Endothelial cell of umbilical vein (primary cell): ENCODE measurements at regions of chr15 and their contacts with region 1.

Region 1: DNA sequence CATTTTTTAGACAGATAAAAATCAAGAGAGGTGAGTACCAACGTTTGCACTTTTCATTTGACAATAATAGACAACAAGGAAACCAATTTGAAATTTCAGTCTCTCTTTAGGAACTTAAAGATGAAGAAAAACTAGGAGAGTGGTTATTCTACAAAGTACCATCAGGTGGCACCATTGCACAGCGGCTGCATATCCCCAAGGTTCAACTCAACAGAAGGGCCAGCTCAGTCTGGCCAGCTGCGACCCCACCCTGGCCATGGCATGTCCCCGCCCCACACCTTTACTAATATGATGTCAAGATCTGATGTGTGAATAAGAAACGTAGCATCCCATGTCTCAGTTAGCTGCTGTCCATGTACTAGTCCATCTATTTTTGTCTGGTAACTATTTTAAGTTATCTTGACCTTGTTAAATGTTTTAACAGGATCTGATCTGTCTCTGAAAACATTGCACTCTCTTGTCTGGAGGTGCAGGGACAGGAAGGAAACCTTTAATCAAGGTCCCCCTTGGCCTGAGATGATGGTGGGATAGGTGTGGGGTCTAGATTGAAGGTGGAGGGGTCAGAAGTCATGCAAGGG is 35.5 kb upstream of the CGNL1 start:
- DNase-seq: peak; percentile 82
- H3K4me3 ChIP-seq: no peak overlapping the region
- H3K27ac ChIP-seq: no peak overlapping the region
- H3K4me1 ChIP-seq: peaks cover 38% of the 10 kb centered on the region
- H3K27me3 ChIP-seq: no peaks in the 10 kb centered on the region
- CTCF ChIP-seq: peak; percentile 59 to 72
- POLR2A ChIP-seq: no peak

Region 2: GRCh38 chr15:56821721-56822425 is 518.9 kb before region 1 on chr15:
- CTCF ChIA-PET with region 1: interaction called, 5 read pairs
- POLR2A ChIA-PET with region 1: no interaction called
- dilution Hi-C with region 1: no loop called
- intact Hi-C with region 1: loop called (anchors 10 kb)
- DNase-seq: peak; percentile 77
- H3K4me3 ChIP-seq: no peak overlapping the region
- H3K27ac ChIP-seq: no peak overlapping the region
- H3K4me1 ChIP-seq: peaks cover 18% of the 10 kb centered on the region
- H3K27me3 ChIP-seq: peaks cover 0 to 3% of the 10 kb centered on the region in 2 experiments
- CTCF ChIP-seq: peak; percentile 65 to 74
- POLR2A ChIP-seq: no peak

Region 3: GRCh38 chr15:56989411-56989924 is 351.3 kb before region 1 on chr15:
- CTCF ChIA-PET with region 1: no interaction called
- POLR2A ChIA-PET with region 1: no interaction called
- dilution Hi-C with region 1: no loop called
- intact Hi-C with region 1: no loop called
- DNase-seq: no peak
- H3K4me3 ChIP-seq: no peak overlapping the region
- H3K27ac ChIP-seq: no peak overlapping the region
- H3K4me1 ChIP-seq: peaks cover 20% of the 10 kb centered on the region
- H3K27me3 ChIP-seq: no peaks in the 10 kb centered on the region
- CTCF ChIP-seq: no peak
- POLR2A ChIP-seq: no peak

Region 4: GRCh38 chr15:57090496-57090859 is 250.3 kb before region 1 on chr15:
- CTCF ChIA-PET with region 1: no interaction called
- POLR2A ChIA-PET with region 1: no interaction called
- dilution Hi-C with region 1: no loop called
- intact Hi-C with region 1: no loop called
- DNase-seq: no peak
- H3K4me3 ChIP-seq: no peak overlapping the region
- H3K27ac ChIP-seq: no peak overlapping the region
- H3K4me1 ChIP-seq: peaks cover 10% of the 10 kb centered on the region
- H3K27me3 ChIP-seq: no peaks in the 10 kb centered on the region
- CTCF ChIP-seq: no peak
- POLR2A ChIP-seq: no peak

Region 5: GRCh38 chr15:57306161-57306943 is 34.4 kb before region 1 on chr15:
- CTCF ChIA-PET with region 1: interaction called, 5 read pairs
- POLR2A ChIA-PET with region 1: no interaction called
- dilution Hi-C with region 1: no loop called
- intact Hi-C with region 1: loop called (anchors 1 kb)
- DNase-seq: peak; percentile 53
- H3K4me3 ChIP-seq: peak overlapping the region; percentile 33 to 39 (median 35)
- H3K27ac ChIP-seq: peak overlapping the region; percentile 32
- H3K4me1 ChIP-seq: peaks cover 11% of the 10 kb centered on the region
- H3K27me3 ChIP-seq: no peaks in the 10 kb centered on the region
- CTCF ChIP-seq: peak; percentile 90 to 91
- POLR2A ChIP-seq: no peak

Region 6: GRCh38 chr15:57395292-57395691 is 54.5 kb after region 1 on chr15:
- CTCF ChIA-PET with region 1: interaction called, 7 read pairs
- POLR2A ChIA-PET with region 1: no interaction called
- dilution Hi-C with region 1: no loop called
- intact Hi-C with region 1: loop called (anchors 2 kb)
- DNase-seq: peak; percentile 91
- H3K4me3 ChIP-seq: no peak overlapping the region
- H3K27ac ChIP-seq: no peak overlapping the region
- H3K4me1 ChIP-seq: peaks cover 56% of the 10 kb centered on the region
- H3K27me3 ChIP-seq: no peaks in the 10 kb centered on the region
- CTCF ChIP-seq: no peak
- POLR2A ChIP-seq: no peak

Region 7: DNA sequence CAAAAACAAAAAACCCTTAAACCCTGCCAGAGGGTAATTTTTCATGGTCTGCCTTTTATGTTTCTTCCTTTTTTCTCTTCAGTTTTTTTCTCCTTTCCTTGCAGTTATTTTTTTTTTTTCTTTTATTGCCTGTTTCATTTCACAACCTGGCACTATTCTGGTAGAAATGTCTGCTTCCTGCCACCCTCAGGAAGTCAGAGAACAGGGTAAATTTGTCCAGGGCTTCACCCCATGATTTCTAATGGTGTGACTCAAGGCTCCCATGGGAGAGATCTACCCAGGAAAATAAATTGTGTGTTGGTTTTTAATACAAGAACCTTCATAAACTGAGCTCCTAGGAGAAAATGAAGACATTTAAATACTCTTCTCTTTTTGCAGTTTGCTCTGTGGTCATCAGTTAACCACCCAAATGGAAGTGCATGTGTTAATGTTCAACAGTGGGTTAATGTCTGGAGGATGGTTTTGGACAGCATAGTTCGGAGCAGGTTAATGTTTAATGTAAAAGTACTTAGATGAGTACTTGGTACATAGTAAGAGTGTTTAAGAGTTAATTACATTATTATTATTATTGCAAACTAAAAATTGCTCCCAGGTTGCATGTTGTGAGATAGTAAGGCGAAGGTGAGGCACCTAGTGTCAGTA is 81.5 kb after region 1 on chr15:
- CTCF ChIA-PET with region 1: no interaction called
- POLR2A ChIA-PET with region 1: no interaction called
- dilution Hi-C with region 1: no loop called
- intact Hi-C with region 1: no loop called
- DNase-seq: peak; percentile 40
- H3K4me3 ChIP-seq: no peak overlapping the region
- H3K27ac ChIP-seq: no peak overlapping the region
- H3K4me1 ChIP-seq: peaks cover 3% of the 10 kb centered on the region
- H3K27me3 ChIP-seq: no peaks in the 10 kb centered on the region
- CTCF ChIP-seq: no peak
- POLR2A ChIP-seq: no peak

Region 8: GRCh38 chr15:57522148-57522547 is 181.4 kb after region 1 on chr15:
- CTCF ChIA-PET with region 1: interaction called, 680 read pairs
- POLR2A ChIA-PET with region 1: interaction called, 5 read pairs
- dilution Hi-C with region 1: loop called (anchors 25 kb)
- intact Hi-C with region 1: loop called (anchors 1 kb)
- DNase-seq: no peak
- H3K4me3 ChIP-seq: no peak overlapping the region
- H3K27ac ChIP-seq: no peak overlapping the region
- H3K4me1 ChIP-seq: peaks cover 25% of the 10 kb centered on the region
- H3K27me3 ChIP-seq: no peaks in the 10 kb centered on the region
- CTCF ChIP-seq: no peak
- POLR2A ChIP-seq: no peak

Region 9: DNA sequence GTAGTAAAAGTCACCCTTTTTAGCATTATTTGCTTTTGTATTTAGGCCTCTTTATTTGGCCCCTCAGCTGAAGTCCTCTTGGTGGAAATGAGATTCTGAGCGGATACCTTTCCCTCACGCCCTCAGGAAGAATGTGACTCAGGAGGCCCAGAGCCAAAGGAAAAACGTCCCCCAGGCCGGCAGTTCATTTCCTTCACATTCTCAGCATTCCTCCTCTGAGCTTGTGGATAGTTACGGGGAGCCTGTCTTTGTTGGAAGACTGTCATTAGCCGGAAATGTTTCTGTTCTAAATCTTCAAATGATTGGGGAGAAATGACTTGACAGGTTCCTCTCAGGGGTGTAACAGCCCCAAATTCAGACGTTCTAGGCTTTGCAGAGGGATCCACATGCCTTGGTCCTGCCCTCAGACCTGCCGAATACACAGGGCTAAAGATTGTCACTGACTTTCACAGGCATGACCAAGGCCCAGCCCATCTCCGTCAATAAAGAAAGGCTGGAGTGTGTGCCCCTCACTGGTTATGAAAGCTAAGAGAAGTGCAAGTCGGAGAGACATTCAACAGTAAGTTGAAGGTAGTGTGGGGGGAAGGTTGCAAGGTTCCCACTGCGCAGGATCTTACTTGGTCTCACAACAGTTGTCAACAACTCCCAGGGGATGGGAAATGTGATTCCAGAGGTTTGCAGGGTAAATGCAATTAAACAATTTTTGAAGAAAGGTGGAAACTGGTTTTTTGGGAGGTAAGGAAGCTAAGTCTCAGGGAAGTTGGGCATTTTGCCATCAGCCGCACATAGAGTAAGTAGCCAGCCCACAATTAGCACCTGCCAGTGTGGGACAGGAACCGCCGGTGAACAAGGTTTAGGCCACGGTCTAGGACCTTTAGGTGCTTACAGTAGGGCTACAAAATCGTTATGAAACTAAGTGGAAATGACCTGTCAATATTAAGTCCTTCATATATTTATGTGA is 211.2 kb after region 1 on chr15:
- CTCF ChIA-PET with region 1: interaction called, 162 read pairs
- POLR2A ChIA-PET with region 1: interaction called, 3 read pairs
- dilution Hi-C with region 1: loop called (anchors 25 kb)
- intact Hi-C with region 1: loop called (anchors 1 kb)
- DNase-seq: peak; percentile 88
- H3K4me3 ChIP-seq: peak overlapping the region in 1 of 3 experiments; percentile 0
- H3K27ac ChIP-seq: peak overlapping the region; percentile 94
- H3K4me1 ChIP-seq: peaks cover 61% of the 10 kb centered on the region
- H3K27me3 ChIP-seq: no peaks in the 10 kb centered on the region
- CTCF ChIP-seq: no peak
- POLR2A ChIP-seq: peak; percentile 11

Region 10: GRCh38 chr15:57780471-57780870 is 439.7 kb after region 1 on chr15:
- CTCF ChIA-PET with region 1: no interaction called
- POLR2A ChIA-PET with region 1: no interaction called
- dilution Hi-C with region 1: no loop called
- intact Hi-C with region 1: no loop called
- DNase-seq: no peak
- H3K4me3 ChIP-seq: no peak overlapping the region
- H3K27ac ChIP-seq: no peak overlapping the region
- H3K4me1 ChIP-seq: no peaks in the 10 kb centered on the region
- H3K27me3 ChIP-seq: no peaks in the 10 kb centered on the region
- CTCF ChIP-seq: no peak
- POLR2A ChIP-seq: no peak

Region 11: GRCh38 chr15:57861036-57861638 is 520.4 kb after region 1 on chr15:
- CTCF ChIA-PET with region 1: interaction called, 5 read pairs
- POLR2A ChIA-PET with region 1: no interaction called
- dilution Hi-C with region 1: no loop called
- intact Hi-C with region 1: loop called (anchors 1 kb)
- DNase-seq: peak; percentile 84
- H3K4me3 ChIP-seq: no peak overlapping the region
- H3K27ac ChIP-seq: peak overlapping the region; percentile 45
- H3K4me1 ChIP-seq: peaks cover 10% of the 10 kb centered on the region
- H3K27me3 ChIP-seq: peaks cover 0 to 2% of the 10 kb centered on the region in 2 experiments
- CTCF ChIP-seq: peak; percentile 58
- POLR2A ChIP-seq: no peak